ENCODE measurements at regions of chr13 and their contacts with region 1.

Region 1: GRCh38 chr13:49669735-49670309 is 21.5 kb downstream of the EBPL start:
- DNase-seq: peak; percentile 50 to 75 (median 66)
- ATAC-seq: peak; percentile 86
- H3K4me3 ChIP-seq: no peak overlapping the region
- H3K27ac ChIP-seq: no peak overlapping the region
- H3K4me1 ChIP-seq: no peaks in the 10 kb centered on the region
- H3K27me3 ChIP-seq: no peaks in the 10 kb centered on the region
- CTCF ChIP-seq: peak; percentile 33 to 86 (median 66)
- POLR2A ChIP-seq: no peak

Region 2: DNA sequence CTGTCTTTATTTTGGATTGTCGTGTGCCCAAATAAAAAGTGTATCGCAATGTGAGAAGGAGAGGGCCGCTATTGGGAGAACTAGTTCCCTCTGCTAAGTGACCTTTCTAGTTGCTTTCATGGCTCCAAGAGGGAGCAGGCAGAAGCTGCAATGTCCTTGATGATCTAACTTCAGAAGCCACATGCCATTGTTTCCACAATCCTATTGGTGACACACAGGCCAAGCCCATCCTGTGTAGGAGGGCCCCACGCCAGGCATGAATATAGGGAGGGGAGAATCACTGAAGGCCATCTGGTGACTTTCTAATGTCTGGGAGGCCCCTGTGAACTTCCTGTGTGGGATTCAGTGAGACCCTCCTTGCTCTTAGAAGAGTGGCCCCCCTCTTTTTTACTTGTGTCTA is 170.4 kb after region 1 on chr13:
- intact Hi-C with region 1: loop called (anchors 5 kb)
- DNase-seq: peak in 1 of 4 donors; percentile 4
- ATAC-seq: no peak
- H3K4me3 ChIP-seq: no peak overlapping the region
- H3K27ac ChIP-seq: no peak overlapping the region
- H3K4me1 ChIP-seq: peaks cover 9% of the 10 kb centered on the region
- H3K27me3 ChIP-seq: no peaks in the 10 kb centered on the region
- CTCF ChIP-seq: no peak
- POLR2A ChIP-seq: no peak

Region 3: GRCh38 chr13:50037788-50038187 is 368.0 kb after region 1 on chr13:
- intact Hi-C with region 1: no loop called
- DNase-seq: no peak
- ATAC-seq: no peak
- H3K4me3 ChIP-seq: no peak overlapping the region
- H3K27ac ChIP-seq: no peak overlapping the region
- H3K4me1 ChIP-seq: no peaks in the 10 kb centered on the region
- H3K27me3 ChIP-seq: no peaks in the 10 kb centered on the region
- CTCF ChIP-seq: no peak
- POLR2A ChIP-seq: no peak